Posterior vena cava (tissue), 2 donors: ENCODE measurements at regions of chr5 and their contacts with region 1.

Region 1: DNA sequence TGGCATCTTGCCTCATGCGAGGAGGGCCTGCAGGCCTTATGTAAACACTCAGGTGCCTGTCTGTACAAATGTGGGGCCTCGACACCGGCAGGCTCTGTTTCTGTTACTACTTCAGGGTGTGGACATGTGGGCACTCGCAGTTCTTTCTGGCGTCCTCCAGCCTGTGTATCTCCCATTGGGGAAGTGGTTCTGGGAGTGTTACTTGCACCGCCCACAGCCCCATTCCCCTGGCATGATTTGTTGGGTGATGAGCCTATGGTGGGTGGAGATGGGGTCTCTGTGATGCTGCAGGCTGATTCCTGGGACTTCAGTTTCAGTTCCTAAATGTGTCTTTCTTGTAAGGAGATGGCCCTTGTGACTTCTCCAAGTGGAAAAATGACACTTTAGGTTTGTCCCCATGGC is 82.1 kb upstream of the PITX1 start:
- DNase-seq: no peak

Region 2: DNA sequence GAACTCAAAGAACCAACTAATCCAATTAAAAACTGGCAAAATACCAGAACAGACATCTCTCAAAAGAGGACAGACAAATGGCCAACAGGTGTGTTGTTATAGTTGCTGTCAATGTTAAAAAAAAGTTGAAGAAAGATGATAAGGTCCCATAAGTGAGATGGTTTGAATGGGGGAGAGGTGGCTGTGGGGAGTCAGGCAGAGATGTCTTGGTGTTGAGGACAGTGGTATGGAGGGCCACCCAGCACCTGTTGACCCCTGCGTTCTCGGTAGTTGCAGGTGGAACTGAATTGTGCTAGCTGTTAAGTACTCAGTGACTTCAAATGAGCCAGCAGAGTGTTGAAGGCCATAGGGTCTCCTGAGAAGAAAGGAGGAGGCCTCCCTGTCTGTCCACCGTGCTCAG is 26.2 kb before region 1 on chr5:
- intact Hi-C with region 1: loop called in 1 of 2 experiments (anchors 1 kb)
- DNase-seq: peak; percentile 41